Activated CD4-positive, alpha-beta T cell treated with anti-CD3 and anti-CD28 coated beads, Interleukin-2, amount 10 ng/mL, durations not matched to agents 24 days and 14 days (primary cell): ENCODE measurements at regions of chr18 and their contacts with region 1.

Region 1: DNA sequence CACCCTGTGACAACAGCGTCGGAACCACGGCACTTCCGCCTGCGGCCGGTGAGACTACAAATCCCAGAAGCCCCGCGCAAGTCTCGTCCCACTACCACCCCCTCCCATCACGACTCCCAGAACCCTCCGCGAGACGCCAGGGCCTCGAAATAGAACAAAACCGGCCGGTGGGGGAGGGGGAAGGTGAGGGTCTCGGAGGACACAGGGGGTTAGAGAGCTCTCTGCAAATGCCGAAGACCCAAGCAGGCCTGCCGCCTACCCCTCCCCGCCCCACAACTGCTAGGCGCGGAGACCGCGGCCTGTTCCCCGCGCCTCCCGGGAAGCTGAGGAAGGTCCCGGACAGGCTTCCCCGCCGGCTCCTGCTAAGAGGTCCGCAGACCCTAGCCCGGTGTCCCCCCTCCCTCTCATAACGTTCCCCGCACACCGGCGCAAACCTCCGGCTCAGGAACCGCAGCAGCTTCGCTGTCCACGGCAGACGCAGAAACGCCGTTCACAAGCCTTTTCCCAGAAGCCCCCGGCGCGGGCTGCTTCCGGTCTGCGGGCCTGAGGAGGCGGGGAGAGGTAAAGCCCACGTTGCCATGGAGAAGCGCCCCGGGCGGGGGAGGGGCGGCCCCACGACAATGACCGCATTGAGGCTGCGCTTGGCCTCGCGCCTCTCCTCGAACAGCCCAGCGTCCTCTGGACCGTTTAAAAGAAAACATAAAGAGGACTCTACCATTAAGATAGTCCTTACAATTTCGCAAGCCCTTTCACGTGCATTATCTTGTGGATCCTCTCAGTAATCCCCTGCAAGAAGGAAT is at the start of gene ZNF24:
- DNase-seq: peak; percentile 98
- H3K4me3 Mint-ChIP-seq: peak within 1 kb of the TSS; percentile 100
- H3K27ac Mint-ChIP-seq: peak within 1 kb of the TSS; percentile 94
- H3K4me1 Mint-ChIP-seq: peaks cover 33% of the 10 kb centered on the region
- H3K27me3 Mint-ChIP-seq: peaks cover 1% of the 10 kb centered on the region
- total RNA-seq, gene ZNF24: 53.9 and 57.8 TPM in 2 replicates

Region 2: DNA sequence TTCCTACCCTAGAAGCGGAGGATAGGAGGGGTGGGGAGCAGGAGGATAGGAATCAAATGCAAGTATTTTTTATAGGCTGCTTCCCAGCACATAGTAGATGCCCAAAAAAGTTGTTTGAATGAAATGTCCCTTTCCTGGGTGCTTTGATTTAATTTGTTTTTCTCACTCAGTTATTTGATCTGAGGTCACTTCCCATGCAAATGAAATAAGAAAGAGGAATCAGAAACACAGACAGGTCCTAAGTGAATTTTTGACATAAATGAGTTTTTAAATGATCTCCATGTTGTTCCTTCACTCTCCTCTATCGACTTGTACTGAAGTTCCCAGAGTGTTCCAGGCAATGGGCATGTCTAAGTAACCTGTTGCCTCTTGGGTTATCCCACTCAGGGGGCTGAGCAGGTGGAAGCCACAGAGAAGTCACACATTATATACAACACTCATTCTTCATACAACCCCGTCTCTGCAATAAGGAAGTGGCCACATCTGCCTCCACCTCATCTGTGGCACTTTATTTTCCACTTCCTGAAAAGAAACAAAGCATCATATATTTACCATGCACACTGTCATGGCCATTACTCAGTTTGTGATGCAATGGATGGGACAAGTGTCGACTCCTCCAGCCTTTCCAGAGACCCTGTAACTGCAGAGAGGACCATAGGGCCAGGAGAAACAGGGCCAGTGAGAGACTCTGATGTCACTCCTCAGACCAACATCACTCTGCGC is 185.2 kb before region 1 on chr18:
- intact Hi-C with region 1: no loop called
- DNase-seq: peak; percentile 77
- H3K4me3 Mint-ChIP-seq: peak overlapping the region; percentile 30
- H3K27ac Mint-ChIP-seq: peak overlapping the region; percentile 88
- H3K4me1 Mint-ChIP-seq: peaks cover 24% of the 10 kb centered on the region
- H3K27me3 Mint-ChIP-seq: no peaks in the 10 kb centered on the region

Region 3: DNA sequence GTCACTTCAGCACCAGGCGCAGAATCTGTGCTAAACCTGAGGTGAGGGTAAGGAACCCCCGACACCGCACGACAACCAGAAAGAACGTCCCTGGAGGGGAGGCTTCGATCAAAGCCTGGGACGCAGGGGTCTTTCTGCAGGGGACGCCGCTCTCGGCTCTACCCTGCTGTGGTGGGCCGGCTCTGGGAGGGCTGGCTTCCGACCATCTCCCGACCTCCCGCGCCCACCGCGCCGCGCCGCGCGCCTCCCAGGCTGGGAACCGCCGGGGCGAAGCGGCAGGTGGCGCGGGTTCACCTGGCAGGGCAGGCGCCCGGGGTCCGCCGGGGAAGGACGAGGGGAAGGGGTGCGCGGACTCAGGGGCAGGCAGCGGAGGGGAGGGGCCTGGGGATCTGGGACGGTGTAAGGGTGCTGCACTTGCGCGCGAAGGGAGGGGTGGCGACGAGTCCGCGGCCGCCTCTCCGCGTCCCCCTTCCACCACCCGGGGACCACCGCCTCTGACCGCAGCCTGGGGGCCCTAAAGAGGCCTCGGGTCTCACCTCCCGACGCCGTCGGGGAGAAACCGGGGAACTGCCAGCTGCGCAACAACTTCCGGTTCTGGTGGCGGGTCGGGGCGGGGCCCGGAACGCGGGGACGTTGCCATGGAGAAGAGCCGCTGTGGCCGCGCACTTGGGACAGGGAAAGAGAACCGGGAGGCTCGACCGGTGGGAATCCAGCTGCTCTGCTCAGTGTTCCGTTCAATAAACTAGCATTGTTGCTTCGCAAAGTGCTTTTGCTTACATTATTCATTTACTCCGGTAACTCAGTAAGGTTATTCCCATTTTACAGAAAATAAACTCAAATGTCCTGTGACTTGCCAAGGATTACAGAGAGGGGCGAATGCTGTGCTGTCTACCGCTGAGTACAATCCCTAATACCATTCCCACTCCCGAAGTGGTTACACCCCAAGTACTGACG is 32.9 kb after region 1 on chr18 and contains the start of gene ZNF396:
- intact Hi-C with region 1: loop called (anchors 2 kb)
- DNase-seq: peak; percentile 92
- H3K4me3 Mint-ChIP-seq: peak within 1 kb of the TSS; percentile 75
- H3K27ac Mint-ChIP-seq: peak within 1 kb of the TSS; percentile 41
- H3K4me1 Mint-ChIP-seq: peaks cover 2% of the 10 kb centered on the region
- H3K27me3 Mint-ChIP-seq: peaks cover 26% of the 10 kb centered on the region
- total RNA-seq, gene ZNF396: 0.19 and 0.26 TPM in 2 replicates

Region 4: GRCh38 chr18:35672897-35673296 is 328.8 kb after region 1 on chr18:
- intact Hi-C with region 1: no loop called
- DNase-seq: no peak
- H3K4me3 Mint-ChIP-seq: no peak overlapping the region
- H3K27ac Mint-ChIP-seq: no peak overlapping the region
- H3K4me1 Mint-ChIP-seq: no peaks in the 10 kb centered on the region
- H3K27me3 Mint-ChIP-seq: no peaks in the 10 kb centered on the region